Head of caudate nucleus (tissue), 42 donors: ENCODE measurements at regions of chr1 and their contacts with region 1.

Region 1: GRCh38 chr1:17125756-17126237 is 6.5 kb upstream of the PADI2 start:
- DNase-seq: peak; percentile 83 to 97 (median 92)

Region 2: DNA sequence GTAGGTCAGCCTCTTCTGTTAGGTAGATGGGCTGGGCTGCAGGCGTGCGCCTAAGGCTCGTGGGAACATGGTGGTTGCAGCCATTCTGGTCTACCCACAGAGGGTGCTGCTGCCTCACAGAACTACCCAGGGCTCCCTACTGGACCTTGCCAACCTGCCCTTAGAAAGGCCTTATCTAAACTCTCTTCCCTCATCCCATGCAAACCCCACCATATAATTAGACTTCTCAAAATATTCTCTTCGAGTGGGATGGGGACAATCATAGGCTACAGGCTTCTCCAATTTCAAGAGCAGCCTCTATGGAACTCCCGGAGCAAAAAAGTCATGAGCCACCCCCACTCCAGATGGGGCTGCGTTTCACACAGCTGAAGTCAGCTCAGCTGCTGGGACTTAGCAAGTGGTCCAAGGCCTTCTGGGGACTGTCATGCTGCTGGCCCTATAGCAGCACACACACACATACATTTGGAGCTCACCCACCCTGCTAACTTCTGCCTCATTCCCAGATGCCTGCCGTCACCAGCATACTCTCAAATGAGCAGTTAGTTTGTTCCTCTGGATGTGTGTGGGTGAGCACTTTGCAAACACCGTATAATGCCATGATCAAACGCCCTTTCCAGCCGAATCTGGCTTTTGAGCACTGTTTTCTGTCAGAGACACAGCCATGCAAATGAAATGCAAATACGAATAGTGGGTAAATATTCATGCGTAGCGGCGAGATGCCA is 65.9 kb before region 1 on chr1:
- intact Hi-C with region 1: loop called (anchors 2 kb)
- DNase-seq: peak; percentile 63 to 91 (median 82)

Region 3: DNA sequence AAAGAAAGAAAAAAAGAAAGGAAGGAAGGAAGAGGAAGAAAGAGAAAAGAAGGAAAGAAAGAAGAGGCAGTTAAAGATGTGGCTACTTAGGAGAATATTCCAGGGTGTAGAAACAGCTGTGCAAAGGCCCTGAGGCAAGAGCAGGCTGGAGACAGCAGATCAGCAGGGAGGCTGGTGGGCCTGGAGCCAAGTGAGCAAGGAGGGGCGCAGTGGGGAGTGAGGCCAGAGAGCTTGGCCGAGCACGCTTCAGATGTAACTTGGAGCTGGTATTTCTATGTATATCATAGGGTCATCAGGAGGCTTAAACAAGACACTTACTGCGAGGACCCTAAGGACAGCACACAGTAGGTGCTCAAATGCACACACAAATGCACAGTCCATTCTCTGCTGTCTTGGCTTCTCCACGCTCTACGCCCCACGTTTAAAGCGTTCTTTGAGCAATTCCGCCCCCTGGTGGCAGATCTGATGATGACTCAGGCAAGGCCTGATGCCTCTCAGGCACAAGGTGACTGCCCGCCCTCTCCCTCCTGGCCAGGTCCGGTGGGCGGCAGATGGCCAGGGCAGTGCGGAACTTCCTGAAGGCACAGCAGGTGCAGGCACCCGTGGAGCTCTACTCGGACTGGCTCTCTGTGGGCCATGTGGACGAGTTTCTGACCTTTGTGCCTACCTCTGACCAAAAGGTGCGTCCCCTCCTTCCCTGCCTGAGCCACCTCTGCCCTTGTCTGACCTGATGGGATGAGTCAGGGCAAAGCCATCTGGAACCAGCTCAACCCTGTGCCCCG is 111.2 kb after region 1 on chr1:
- intact Hi-C with region 1: loop called (anchors 5 kb)
- DNase-seq: peak; percentile 66 to 97 (median 91)

Region 4: GRCh38 chr1:17335821-17336710 is 210.3 kb after region 1 on chr1:
- intact Hi-C with region 1: loop called (anchors 10 kb)
- DNase-seq: peak; percentile 38 to 88 (median 71)

Region 5: GRCh38 chr1:17405898-17406759 is 280.3 kb after region 1 on chr1:
- intact Hi-C with region 1: loop called (anchors 10 kb)
- DNase-seq: peak; percentile 47 to 87 (median 72)

Region 6: GRCh38 chr1:17460245-17460644 is 334.4 kb after region 1 on chr1:
- intact Hi-C with region 1: no loop called
- DNase-seq: no peak